Right ventricle myocardium inferior (tissue), 1 donor: ENCODE measurements at regions of chr18 and their contacts with region 1.

Region 1: GRCh38 chr18:44789710-44790109 is 109.0 kb downstream of the SETBP1 start:
- DNase-seq: no peak
- ATAC-seq: peak; percentile 40

Region 2: GRCh38 chr18:44620812-44621211 is 168.9 kb before region 1 on chr18:
- intact Hi-C with region 1: no loop called
- DNase-seq: no peak
- ATAC-seq: no peak

Region 3: DNA sequence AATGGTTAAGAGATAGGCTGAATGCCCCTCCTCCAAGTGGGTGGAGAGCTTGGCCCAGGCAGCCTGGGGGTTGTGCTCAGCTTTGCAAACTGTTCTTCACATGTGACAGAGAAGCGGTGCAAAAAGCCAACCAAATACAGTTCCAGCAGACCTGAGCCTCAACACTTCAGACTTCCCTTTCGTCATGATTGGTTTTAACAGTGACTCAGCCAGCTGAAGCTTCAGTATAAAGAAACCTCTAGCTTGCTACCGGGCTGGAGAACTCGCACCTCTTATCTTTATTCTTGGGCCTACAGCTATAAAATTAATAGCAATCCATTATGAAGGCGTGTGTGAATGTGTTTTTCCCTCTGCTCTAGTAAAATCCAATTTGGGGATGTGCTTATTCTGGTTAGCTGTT is 89.1 kb before region 1 on chr18:
- intact Hi-C with region 1: no loop called
- DNase-seq: no peak
- ATAC-seq: peak; percentile 49

Region 4: DNA sequence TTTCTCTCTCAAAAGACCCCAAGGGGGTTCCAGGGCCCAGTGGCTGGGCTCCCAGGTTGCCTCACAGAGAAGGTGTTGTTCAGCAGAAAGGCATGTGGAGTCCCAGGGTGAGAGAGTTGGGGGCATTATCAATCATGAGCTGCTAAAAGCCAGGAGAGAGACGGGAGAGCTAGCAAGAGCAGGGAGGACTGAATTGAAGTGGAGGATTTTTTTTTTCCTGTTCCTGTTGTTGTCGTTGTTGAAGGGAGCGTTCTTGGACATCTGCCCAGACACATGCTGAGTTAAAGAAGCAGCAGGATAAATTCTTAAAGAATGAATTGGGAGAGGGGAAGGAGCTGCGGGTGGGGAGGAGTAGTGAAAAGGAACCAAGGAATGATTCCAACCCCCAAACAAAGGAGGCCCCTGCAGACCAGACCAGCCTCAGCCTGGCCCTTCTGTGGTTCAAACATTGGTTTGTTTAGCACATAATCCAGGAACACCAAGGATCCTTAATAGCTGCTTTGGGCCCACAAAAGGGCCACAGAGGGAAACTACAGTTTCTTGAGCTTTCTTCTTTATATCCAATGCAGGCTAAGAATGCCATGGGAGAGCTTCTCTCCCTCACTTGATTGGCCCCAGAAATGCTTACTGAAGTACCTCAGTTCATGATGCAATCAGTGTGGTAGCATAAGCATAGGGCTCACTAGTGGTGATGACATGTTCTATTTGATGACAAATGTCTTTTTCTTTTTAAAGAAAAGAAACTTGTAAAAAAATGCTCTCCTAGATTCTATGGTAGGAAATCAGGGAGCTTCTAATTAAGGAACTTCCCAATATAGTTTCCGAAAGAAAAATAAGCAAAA is 36.9 kb after region 1 on chr18:
- intact Hi-C with region 1: loop called (anchors 5 kb)
- DNase-seq: no peak
- ATAC-seq: peak; percentile 76